Endothelial cell of umbilical vein (primary cell): ENCODE measurements at regions of chr3 and their contacts with region 1.

Region 1: DNA sequence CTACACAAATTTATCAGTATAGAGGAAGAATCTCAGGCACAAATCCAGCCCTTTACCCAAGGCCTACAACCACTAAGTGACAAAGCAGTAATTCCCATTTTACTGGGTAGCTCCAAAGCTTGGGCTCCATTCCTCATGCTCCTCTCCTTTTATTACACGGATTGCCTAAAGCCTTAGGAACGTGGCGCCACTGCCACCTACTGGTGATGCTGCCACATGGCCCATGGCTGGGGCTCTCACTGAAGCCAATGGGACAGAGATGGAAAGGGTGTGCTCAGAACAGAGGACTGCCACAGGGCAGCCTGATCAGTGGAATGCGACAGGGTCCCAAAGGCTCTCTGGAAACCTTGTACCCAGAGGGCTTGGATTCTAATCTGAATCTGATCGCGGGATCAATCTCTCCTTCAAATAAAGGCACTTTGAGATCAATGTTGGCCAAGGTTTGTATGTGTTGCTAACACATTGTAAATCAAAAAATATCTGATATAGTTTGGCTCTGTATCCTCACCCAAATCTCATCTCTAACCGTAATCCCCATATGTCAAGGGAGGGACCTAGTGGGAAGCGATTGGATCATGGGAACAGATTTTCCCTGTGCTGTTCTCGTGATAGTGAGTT is 33.5 kb upstream of the LYZL4 start:
- DNase-seq: peak; percentile 74
- H3K4me3 ChIP-seq: no peak overlapping the region
- H3K27ac ChIP-seq: no peak overlapping the region
- H3K4me1 ChIP-seq: no peaks in the 10 kb centered on the region
- H3K27me3 ChIP-seq: no peaks in the 10 kb centered on the region
- CTCF ChIP-seq: peak; percentile 95 to 98
- POLR2A ChIP-seq: no peak

Region 2: GRCh38 chr3:42118762-42119361 is 325.1 kb before region 1 on chr3:
- CTCF ChIA-PET with region 1: interaction called, 5 read pairs
- POLR2A ChIA-PET with region 1: no interaction called
- dilution Hi-C with region 1: no loop called
- intact Hi-C with region 1: loop called (anchors 1 kb)
- DNase-seq: peak; percentile 75
- H3K4me3 ChIP-seq: no peak overlapping the region
- H3K27ac ChIP-seq: peak overlapping the region; percentile 77
- H3K4me1 ChIP-seq: peaks cover 48% of the 10 kb centered on the region
- H3K27me3 ChIP-seq: no peaks in the 10 kb centered on the region
- CTCF ChIP-seq: peak; percentile 39 to 50
- POLR2A ChIP-seq: no peak

Region 3: GRCh38 chr3:42247576-42248027 is 196.3 kb before region 1 on chr3:
- CTCF ChIA-PET with region 1: interaction called, 156 read pairs
- POLR2A ChIA-PET with region 1: no interaction called
- dilution Hi-C with region 1: no loop called
- intact Hi-C with region 1: loop called (anchors 1 kb)
- DNase-seq: peak; percentile 61
- H3K4me3 ChIP-seq: no peak overlapping the region
- H3K27ac ChIP-seq: no peak overlapping the region
- H3K4me1 ChIP-seq: no peaks in the 10 kb centered on the region
- H3K27me3 ChIP-seq: peaks cover 20 to 24% of the 10 kb centered on the region in 2 experiments
- CTCF ChIP-seq: peak; percentile 60 to 70
- POLR2A ChIP-seq: no peak

Region 4: GRCh38 chr3:42539869-42540714 is 96.2 kb after region 1 on chr3:
- CTCF ChIA-PET with region 1: interaction called, 4 read pairs
- POLR2A ChIA-PET with region 1: no interaction called
- dilution Hi-C with region 1: no loop called
- intact Hi-C with region 1: loop called (anchors 1 kb)
- DNase-seq: no peak
- H3K4me3 ChIP-seq: no peak overlapping the region
- H3K27ac ChIP-seq: no peak overlapping the region
- H3K4me1 ChIP-seq: no peaks in the 10 kb centered on the region
- H3K27me3 ChIP-seq: no peaks in the 10 kb centered on the region
- CTCF ChIP-seq: peak; percentile 62 to 78
- POLR2A ChIP-seq: no peak